Uterus (tissue), 4 donors: ENCODE measurements at regions of chr2 and their contacts with region 1.

Region 1: GRCh38 chr2:237474931-237475703 is 11.9 kb upstream of the MLPH start:
- DNase-seq: peak; percentile 85 to 90
- H3K4me3 ChIP-seq: peak overlapping the region; percentile 39 to 58
- H3K27ac ChIP-seq: peak overlapping the region; percentile 92 to 94
- H3K4me1 ChIP-seq: peaks cover 0 to 4% of the 10 kb centered on the region in 2 donors
- H3K27me3 ChIP-seq: no peaks in the 10 kb centered on the region
- CTCF ChIP-seq: peak; percentile 93 to 98 (median 94)
- POLR2A ChIP-seq: peak; percentile 38 to 68

Region 2: GRCh38 chr2:237418300-237418699 is 56.8 kb before region 1 on chr2:
- intact Hi-C with region 1: loop called (anchors 5 kb)
- DNase-seq: no peak
- H3K4me3 ChIP-seq: no peak overlapping the region
- H3K27ac ChIP-seq: peak overlapping the region in 1 of 2 donors; percentile 4
- H3K4me1 ChIP-seq: peaks cover 0 to 8% of the 10 kb centered on the region in 2 donors
- H3K27me3 ChIP-seq: no peaks in the 10 kb centered on the region
- CTCF ChIP-seq: no peak
- POLR2A ChIP-seq: no peak

Region 3: GRCh38 chr2:237512774-237513466 is 37.8 kb after region 1 on chr2:
- intact Hi-C with region 1: no loop called
- DNase-seq: peak; percentile 90 to 92
- H3K4me3 ChIP-seq: no peak overlapping the region
- H3K27ac ChIP-seq: peak overlapping the region; percentile 67 to 77
- H3K4me1 ChIP-seq: no peaks in the 10 kb centered on the region
- H3K27me3 ChIP-seq: no peaks in the 10 kb centered on the region
- CTCF ChIP-seq: peak; percentile 89 to 97 (median 95)
- POLR2A ChIP-seq: no peak

Region 4: DNA sequence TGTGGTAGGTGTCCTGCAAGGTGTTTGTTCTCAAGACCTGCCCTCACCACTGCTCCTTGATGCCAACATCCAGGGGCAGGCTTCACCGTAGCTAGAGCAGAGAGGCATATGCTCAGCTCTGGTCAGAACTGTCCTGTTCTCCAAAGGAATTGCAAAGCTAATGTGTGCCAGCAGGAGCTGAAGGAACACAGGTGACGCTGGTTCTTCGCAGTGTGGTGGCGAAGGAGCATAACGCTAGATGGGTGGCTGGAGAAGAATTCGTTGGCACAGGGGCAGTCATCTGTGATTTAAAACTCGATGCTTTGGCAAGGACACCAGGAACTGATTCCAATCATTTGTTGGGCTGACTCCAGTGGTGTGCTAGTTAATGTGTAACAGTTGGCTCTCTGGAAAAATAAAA is 824.7 kb after region 1 on chr2:
- intact Hi-C with region 1: no loop called
- DNase-seq: no peak
- H3K4me3 ChIP-seq: no peak overlapping the region
- H3K27ac ChIP-seq: no peak overlapping the region
- H3K4me1 ChIP-seq: no peaks in the 10 kb centered on the region
- H3K27me3 ChIP-seq: no peaks in the 10 kb centered on the region
- CTCF ChIP-seq: no peak
- POLR2A ChIP-seq: peak in 1 of 2 donors; percentile 22